ENCODE measurements at regions of chr2 and their contacts with region 1.

Region 1: DNA sequence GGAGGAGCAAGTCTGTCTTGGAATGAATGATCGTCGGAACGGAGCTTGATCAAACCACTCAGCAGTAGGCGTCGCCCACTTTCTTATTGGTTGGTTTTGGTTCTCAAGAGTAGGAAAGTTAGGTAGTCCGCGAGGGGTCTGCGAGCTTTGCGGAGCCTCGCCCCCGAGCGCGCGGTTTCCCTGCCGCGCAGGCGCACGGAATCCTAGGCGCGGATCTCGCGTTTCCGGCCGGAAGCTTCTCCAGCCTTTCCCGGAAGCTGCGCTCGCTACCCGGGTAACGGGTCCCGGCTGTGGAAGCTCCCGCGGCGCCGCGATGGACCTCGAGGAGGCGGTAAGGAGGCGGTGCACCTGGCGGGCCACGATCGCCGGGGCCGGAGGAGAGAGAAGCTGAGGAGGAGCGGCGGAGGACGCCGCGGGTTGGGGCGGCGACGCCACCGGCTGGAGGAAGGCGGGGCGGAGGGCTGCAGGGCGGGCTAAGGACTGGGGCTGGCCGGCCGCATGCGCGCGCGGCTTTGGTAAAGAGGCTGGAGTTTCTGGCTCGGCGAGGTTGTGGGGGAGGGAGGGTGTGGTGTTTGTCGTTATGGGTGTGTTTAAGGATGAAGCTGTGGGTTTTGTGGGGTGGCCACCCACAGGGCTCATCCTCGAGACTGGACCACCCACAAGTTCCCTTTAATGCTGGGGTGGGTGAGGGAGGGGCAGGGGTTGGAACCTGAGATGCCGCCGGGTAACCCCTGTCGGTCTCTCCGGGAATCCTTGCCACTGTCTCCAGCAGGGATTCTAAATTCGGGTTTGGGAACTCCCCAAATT is at the start of gene TAF1B:
- DNase-seq: peak; percentile 96
- H3K4me3 ChIP-seq: peak within 1 kb of the TSS; percentile 56 to 86 (median 84)
- H3K27ac ChIP-seq: peak within 1 kb of the TSS; percentile 78
- H3K4me1 ChIP-seq: peaks cover 28% of the 10 kb centered on the region
- H3K27me3 ChIP-seq: no peaks in the 10 kb centered on the region
- CTCF ChIP-seq: peak in 1 of 2 donors; percentile 42
- POLR2A ChIP-seq: peak; percentile 80
- total RNA-seq, gene TAF1B: 20.1 and 29.4 TPM in 2 replicates

Region 2: GRCh38 chr2:9905379-9905778 is 61.9 kb after region 1 on chr2:
- CTCF ChIA-PET with region 1: no interaction called
- POLR2A ChIA-PET with region 1: no interaction called
- dilution Hi-C with region 1: no loop called
- intact Hi-C with region 1: no loop called
- DNase-seq: no peak
- H3K4me3 ChIP-seq: no peak overlapping the region
- H3K27ac ChIP-seq: no peak overlapping the region
- H3K4me1 ChIP-seq: no peaks in the 10 kb centered on the region
- H3K27me3 ChIP-seq: no peaks in the 10 kb centered on the region
- CTCF ChIP-seq: no peak
- POLR2A ChIP-seq: no peak

Region 3: DNA sequence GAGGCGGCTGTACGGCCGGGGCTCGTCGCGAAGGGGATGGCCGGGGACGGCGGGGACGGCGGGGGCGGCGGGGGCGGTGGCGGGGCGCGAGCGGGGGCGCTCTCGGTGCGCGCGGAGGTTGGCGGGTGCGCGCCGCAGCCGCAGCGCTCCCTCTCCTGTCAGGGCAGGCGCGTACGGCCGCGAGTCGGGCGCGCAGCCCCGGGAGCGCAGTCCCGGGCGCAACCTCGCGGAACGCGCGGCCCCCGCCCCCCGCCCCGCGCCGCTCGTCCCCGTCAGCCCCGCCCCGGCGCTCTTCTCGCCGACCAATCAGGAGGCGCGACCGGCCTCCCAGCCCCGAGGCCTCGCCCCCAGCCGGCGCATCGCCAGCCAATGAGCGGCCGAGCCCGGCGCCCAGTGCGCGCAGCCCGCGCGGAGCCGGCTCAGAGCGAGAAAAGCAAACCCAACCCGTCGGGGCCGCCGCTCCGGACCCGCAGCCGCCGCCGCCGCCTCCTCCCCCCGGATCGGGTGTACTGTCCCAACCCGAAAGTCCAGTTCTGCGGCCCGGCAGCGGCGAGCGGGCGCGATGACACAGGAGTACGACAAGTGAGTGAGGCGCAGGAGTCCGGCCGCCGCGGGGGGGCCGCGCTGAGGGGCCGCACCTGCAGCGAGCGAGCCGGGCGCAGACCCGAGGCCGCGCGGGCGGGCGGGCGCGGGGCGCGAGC is 108.0 kb after region 1 on chr2 and contains the start of gene GRHL1:
- CTCF ChIA-PET with region 1: no interaction called
- POLR2A ChIA-PET with region 1: no interaction called
- dilution Hi-C with region 1: no loop called
- intact Hi-C with region 1: loop called (anchors 5 kb)
- DNase-seq: peak; percentile 92
- H3K4me3 ChIP-seq: peak within 1 kb of the TSS; percentile 58 to 67 (median 59)
- H3K27ac ChIP-seq: no peak within 1 kb of the TSS
- H3K4me1 ChIP-seq: peaks cover 4% of the 10 kb centered on the region
- H3K27me3 ChIP-seq: no peaks in the 10 kb centered on the region
- CTCF ChIP-seq: no peak
- POLR2A ChIP-seq: no peak
- total RNA-seq, gene GRHL1: 0.85 and 1.1 TPM in 2 replicates

Region 4: DNA sequence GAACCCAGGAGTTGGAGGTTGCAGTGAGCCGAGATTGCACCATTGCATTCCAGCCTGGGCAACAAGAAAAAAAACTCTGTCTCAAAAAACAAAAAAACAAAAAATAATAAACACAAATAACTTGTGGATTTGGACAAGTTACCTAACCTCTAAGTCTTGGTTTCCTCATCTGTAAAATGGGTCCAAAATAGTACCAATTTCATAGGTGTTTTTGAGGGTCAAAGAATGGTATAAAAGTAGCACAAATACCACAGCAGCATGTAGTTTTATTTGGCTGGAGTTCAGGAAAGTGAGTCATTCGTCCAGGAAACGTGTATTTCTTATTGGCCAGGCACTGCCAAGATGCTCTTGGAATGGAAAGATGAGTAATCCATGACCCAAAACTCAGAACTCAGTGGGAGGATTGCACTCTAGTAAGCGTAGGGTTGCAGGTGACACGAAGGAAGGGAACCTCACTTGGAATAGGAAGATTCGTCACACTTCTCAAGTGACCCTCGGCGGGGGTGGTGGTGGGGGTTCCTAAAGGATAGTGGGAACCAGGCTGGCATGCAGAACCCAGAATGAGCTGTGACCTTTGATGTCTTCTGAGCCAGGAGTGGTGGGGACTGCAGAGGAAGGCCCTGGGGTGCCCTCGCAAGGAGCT is 132.5 kb after region 1 on chr2:
- CTCF ChIA-PET with region 1: no interaction called
- POLR2A ChIA-PET with region 1: no interaction called
- dilution Hi-C with region 1: no loop called
- intact Hi-C with region 1: loop called (anchors 1 kb)
- DNase-seq: peak; percentile 97
- H3K4me3 ChIP-seq: no peak overlapping the region
- H3K27ac ChIP-seq: peak overlapping the region; percentile 2
- H3K4me1 ChIP-seq: peaks cover 37% of the 10 kb centered on the region
- H3K27me3 ChIP-seq: no peaks in the 10 kb centered on the region
- CTCF ChIP-seq: no peak
- POLR2A ChIP-seq: no peak

Region 5: GRCh38 chr2:10620481-10620880 is 777.0 kb after region 1 on chr2:
- CTCF ChIA-PET with region 1: no interaction called
- POLR2A ChIA-PET with region 1: no interaction called
- dilution Hi-C with region 1: no loop called
- intact Hi-C with region 1: no loop called
- DNase-seq: no peak
- H3K4me3 ChIP-seq: no peak overlapping the region
- H3K27ac ChIP-seq: no peak overlapping the region
- H3K4me1 ChIP-seq: peaks cover 3% of the 10 kb centered on the region
- H3K27me3 ChIP-seq: no peaks in the 10 kb centered on the region
- CTCF ChIP-seq: no peak
- POLR2A ChIP-seq: no peak

Measured in endothelial cell of umbilical vein (primary cell).